Right ventricle myocardium inferior (tissue), 1 donor: ENCODE measurements at regions of chr2 and their contacts with region 1.

Region 1: DNA sequence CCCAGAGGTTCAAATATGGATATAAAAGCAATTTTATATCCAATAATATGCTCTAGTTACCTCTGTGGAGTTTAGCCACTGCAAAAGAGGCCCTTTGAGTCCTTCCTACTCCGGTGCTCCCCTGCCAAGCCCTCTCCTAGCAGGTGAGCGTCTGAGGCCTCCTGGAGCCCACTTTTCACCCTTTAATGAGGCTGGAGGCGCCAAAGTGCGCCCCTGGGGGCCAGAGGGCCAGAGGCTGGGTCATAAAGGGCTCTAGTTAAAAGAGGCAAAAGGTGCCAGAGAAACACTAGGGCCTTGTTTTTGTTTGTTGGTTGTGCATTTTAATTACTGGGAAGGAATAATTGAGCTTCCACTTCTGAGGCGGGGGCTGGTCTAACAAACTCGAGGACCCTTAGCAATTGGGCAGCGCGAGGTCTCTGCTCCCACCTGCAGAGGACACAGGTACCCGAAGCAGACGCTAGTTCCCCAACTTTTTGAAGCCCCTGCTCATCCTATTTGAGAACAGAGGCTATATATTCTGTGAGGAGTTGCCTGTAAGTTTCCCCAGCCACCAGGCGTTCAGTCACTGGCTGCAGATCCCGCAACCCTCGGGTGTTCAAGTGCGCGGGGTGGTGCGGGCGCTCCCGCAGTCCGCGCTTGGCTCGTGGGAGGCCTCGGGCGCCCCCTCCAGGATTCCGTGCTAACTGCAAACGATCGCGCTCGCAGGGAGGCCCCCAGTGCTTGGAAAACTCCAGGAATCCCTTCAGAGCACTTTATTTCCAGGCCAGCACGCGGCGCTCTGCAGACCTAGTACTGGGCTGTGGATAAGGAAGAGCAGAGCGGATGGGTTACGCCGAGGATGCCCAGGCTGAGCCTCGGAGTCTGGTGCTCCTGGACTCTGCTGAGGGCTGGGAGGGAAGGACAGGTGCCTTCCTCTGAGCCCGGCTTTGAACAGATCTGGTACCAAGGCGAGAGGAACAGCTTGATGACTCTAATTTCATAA is 14.1 kb downstream of the MSGN1 start:
- DNase-seq: peak; percentile 82
- ATAC-seq: peak; percentile 91

Region 2: GRCh38 chr2:17719562-17720371 is 110.6 kb before region 1 on chr2:
- intact Hi-C with region 1: loop called (anchors 1 kb)
- DNase-seq: no peak
- ATAC-seq: no peak

Region 3: DNA sequence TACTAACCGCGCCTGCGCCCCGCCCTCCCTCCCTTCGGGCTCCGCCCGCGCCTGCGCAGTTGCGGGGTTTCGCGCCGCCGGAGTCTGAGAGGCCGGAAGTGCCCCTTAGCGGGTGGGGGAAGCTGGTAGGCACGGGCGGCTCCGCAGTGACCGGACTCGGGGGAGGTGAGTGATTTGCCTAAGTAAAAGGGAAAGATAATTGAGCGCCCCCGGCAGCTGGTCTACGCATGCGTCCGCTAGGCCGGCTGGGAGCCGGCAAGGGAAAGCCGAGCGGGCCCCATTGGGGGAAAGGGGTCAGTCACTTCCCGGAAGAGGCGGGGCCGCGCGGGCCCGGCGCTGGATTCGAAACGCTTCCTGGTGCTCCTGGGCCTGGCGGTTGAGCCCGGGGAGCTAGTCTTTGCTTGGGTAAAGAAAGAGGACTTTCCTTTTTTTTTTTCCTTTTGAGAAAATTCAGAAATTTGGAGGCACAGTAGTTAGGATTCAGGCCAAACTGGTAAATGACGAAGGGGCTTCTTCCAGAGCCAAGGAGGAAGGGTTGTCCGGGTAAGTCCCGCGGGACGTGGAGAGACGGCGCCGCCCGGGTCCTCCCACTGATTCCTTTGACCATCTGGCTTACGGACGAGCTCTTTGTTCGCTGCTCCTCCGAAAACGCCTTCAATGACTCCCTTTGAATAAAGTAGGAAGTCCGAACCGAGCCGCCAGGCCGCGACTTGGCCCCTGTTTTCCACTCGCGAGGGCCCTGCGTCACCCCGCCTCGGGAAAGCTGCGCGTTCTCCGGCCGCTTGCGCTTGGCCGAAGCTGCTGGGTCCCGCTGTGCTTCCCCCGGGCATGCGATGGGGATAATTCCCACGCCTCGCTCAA is 76.3 kb before region 1 on chr2 and contains the starts of genes GEN1 and SMC6:
- intact Hi-C with region 1: loop called (anchors 1 kb)
- DNase-seq: peak; percentile 95
- ATAC-seq: peak; percentile 97
- total RNA-seq, gene GEN1: 3.3 TPM
- total RNA-seq, gene SMC6: 12.7 TPM